Activated CD4-positive, alpha-beta T cell treated with anti-CD3 and anti-CD28 coated beads, Interleukin-2, amount 10 ng/mL, durations not matched to agents 24 days and 14 days (primary cell): ENCODE measurements at regions of chr5 and their contacts with region 1.

Region 1: GRCh38 chr5:133051580-133052332 is at the start of gene HSPA4:
- DNase-seq: peak; percentile 99
- H3K4me3 Mint-ChIP-seq: peak within 1 kb of the TSS; percentile 89
- H3K27ac Mint-ChIP-seq: peak within 1 kb of the TSS; percentile 99
- H3K4me1 Mint-ChIP-seq: peaks cover 25% of the 10 kb centered on the region
- H3K27me3 Mint-ChIP-seq: peaks cover 2% of the 10 kb centered on the region
- total RNA-seq, gene HSPA4: 267 and 270 TPM in 2 replicates

Region 2: GRCh38 chr5:132639706-132640130 is 412.0 kb before region 1 on chr5:
- intact Hi-C with region 1: no loop called
- DNase-seq: peak; percentile 77
- H3K4me3 Mint-ChIP-seq: peak overlapping the region; percentile 52
- H3K27ac Mint-ChIP-seq: peak overlapping the region; percentile 86
- H3K4me1 Mint-ChIP-seq: peaks cover 72% of the 10 kb centered on the region
- H3K27me3 Mint-ChIP-seq: no peaks in the 10 kb centered on the region

Region 3: DNA sequence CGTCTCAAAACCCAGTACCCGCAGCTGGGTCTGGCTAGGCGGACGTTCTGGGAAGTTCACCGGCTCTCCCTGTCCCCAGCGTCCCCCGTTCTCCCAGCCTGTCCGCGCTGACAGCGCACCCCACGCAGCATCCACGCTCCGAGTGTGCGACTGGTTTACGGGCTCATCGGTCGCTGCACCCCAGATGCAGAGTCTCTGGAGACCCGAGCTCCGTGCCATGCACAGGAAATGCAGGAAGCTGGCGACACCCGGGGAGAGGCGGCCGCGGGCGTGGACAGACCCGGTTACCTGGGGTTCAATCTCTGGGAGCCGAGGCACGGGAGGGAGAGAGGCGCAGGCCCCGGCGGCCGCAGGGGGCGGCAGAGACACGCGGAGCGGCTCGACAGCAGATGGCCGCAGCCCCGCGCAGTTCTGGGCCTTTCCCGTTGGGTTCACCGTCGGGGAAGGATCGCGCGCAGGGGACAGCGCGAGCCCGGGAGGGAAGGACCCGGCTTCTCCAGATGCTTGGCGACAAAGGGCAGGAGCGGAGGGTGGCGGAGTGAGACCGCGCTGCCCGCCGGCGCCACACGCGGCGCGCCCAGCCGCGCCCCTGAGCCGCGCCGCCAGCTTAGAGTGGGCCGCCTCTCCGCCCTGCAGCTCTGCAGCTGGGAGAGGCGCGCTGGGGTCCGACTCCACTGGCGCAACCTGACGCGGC is 221.9 kb before region 1 on chr5:
- intact Hi-C with region 1: loop called (anchors 5 kb)
- DNase-seq: peak; percentile 92
- H3K4me3 Mint-ChIP-seq: peak overlapping the region; percentile 84
- H3K27ac Mint-ChIP-seq: peak overlapping the region; percentile 84
- H3K4me1 Mint-ChIP-seq: peaks cover 19% of the 10 kb centered on the region
- H3K27me3 Mint-ChIP-seq: peaks cover 52% of the 10 kb centered on the region

Region 4: GRCh38 chr5:132866342-132867045 is 185.3 kb before region 1 on chr5 and contains the starts of genes GDF9 and UQCRQ:
- intact Hi-C with region 1: loop called (anchors 1 kb)
- DNase-seq: peak; percentile 98
- H3K4me3 Mint-ChIP-seq: peak within 1 kb of the TSS; percentile 95
- H3K27ac Mint-ChIP-seq: peak within 1 kb of the TSS; percentile 99
- H3K4me1 Mint-ChIP-seq: peaks cover 24% of the 10 kb centered on the region
- H3K27me3 Mint-ChIP-seq: peaks cover 9% of the 10 kb centered on the region
- total RNA-seq, gene GDF9: 0.30 and 0.45 TPM in 2 replicates
- total RNA-seq, gene UQCRQ: 454 and 464 TPM in 2 replicates

Region 5: DNA sequence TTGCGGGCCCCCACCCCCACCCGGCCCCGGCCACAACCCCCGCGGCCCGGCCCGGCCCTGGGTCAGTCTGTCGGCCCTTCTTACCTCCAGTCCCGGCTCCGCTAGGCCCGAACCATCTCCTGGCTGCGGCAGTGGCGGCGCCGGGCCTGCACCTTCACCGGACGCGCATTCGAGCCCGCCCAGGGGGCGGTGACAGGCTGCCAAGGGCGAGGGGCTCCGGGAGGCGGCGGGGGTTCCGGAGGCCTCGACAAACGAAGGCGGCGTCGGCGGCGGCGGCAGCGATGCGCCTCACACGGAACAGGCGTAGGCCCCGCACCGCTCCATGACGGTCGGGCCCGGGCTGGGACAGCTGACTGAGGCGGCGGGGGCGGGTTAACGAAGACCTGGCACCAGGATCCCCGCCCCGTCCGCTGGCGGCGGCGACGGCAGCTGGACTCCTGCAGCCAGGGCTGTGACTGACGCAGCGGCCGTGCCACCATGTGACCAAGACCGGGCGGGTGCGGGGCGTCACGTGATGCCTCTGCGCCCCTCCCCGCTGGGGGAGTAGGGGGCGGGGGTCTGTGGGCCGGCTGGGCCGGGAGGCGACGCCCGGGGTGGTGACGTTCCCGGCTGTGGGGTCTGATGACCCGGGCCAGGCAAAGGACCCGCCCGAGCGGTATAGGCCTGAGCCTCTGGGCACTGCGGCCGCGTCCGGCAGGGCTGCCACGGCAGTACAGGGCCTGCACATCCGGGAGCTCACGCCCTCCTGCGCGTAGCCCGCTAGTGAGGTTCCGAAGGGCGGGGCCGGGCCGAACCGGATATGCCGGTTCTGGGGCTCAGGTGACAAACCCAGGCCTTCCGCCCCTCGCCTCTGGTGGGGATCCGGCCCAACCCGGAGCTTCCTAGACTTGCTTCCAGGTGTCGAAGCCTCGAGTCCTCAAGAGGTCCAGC is 88.3 kb before region 1 on chr5 and contains the start of gene AFF4:
- intact Hi-C with region 1: loop called (anchors 1 kb)
- DNase-seq: peak; percentile 96
- H3K4me3 Mint-ChIP-seq: peak within 1 kb of the TSS; percentile 92
- H3K27ac Mint-ChIP-seq: peak within 1 kb of the TSS; percentile 93
- H3K4me1 Mint-ChIP-seq: peaks cover 20% of the 10 kb centered on the region
- H3K27me3 Mint-ChIP-seq: peaks cover 2% of the 10 kb centered on the region
- total RNA-seq, gene AFF4: 32.3 and 32.7 TPM in 2 replicates

Region 6: GRCh38 chr5:133025804-133026663 is 25.7 kb before region 1 on chr5 and contains the start of gene ZCCHC10:
- intact Hi-C with region 1: loop called (anchors 1 kb)
- DNase-seq: peak; percentile 98
- H3K4me3 Mint-ChIP-seq: peak within 1 kb of the TSS; percentile 88
- H3K27ac Mint-ChIP-seq: peak within 1 kb of the TSS; percentile 91
- H3K4me1 Mint-ChIP-seq: peaks cover 13% of the 10 kb centered on the region
- H3K27me3 Mint-ChIP-seq: peaks cover 6% of the 10 kb centered on the region
- total RNA-seq, gene ZCCHC10: 32.2 and 36.0 TPM in 2 replicates

Region 7: GRCh38 chr5:133063965-133064364 is 12.2 kb after region 1 on chr5:
- intact Hi-C with region 1: no loop called
- DNase-seq: no peak
- H3K4me3 Mint-ChIP-seq: no peak overlapping the region
- H3K27ac Mint-ChIP-seq: no peak overlapping the region
- H3K4me1 Mint-ChIP-seq: peaks cover 18% of the 10 kb centered on the region
- H3K27me3 Mint-ChIP-seq: no peaks in the 10 kb centered on the region

Region 8: DNA sequence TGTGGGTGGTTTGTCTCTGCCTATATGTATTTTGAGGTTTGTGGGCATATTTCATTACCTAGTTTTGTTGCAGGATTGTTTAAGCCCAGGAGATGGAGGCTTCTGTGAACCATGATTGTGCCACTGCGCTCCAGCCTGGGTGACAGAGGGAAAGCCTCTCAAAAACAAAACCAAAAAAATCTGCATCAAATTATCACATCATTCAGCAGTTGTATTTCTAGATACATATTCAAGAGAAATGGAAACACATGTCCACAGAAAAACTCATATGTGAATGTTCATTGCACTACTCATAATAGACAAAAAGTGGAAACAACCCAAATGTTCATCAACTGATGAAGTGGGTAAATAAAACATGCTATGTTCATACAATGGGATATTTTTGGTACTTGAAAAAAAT is 29.9 kb after region 1 on chr5:
- intact Hi-C with region 1: loop called (anchors 2 kb)
- DNase-seq: no peak
- H3K4me3 Mint-ChIP-seq: peak overlapping the region; percentile 39
- H3K27ac Mint-ChIP-seq: peak overlapping the region; percentile 84
- H3K4me1 Mint-ChIP-seq: peaks cover 33% of the 10 kb centered on the region
- H3K27me3 Mint-ChIP-seq: no peaks in the 10 kb centered on the region

Region 9: GRCh38 chr5:134176511-134177368 is 1125.0 kb after region 1 on chr5 and contains the start of gene SKP1:
- intact Hi-C with region 1: loop called (anchors 5 kb)
- DNase-seq: peak; percentile 96
- H3K4me3 Mint-ChIP-seq: peak within 1 kb of the TSS; percentile 93
- H3K27ac Mint-ChIP-seq: peak within 1 kb of the TSS; percentile 97
- H3K4me1 Mint-ChIP-seq: peaks cover 21% of the 10 kb centered on the region
- H3K27me3 Mint-ChIP-seq: no peaks in the 10 kb centered on the region
- total RNA-seq, gene SKP1: 266 and 289 TPM in 2 replicates